Right cardiac atrium (tissue), 5 donors: ENCODE measurements at regions of chr2 and their contacts with region 1.

Region 1: DNA sequence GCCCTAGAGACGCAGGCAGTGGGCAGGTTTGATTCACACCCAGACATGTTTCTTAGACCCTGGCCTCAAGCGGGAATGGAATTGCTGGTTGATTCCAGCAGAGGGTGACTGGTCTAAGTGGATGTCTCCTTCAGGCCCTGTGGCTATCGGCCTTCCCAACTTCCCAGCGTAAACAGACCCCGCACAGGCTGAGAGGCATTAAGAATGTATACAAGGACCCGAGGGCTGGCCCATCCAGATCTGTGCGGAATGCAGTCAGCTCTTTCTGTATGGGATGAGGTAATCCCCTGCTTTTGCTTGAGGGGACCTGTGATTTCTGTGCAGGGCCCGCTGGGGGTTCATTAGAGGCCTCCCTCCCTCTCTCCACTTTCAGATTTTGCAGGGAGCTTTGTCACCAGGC is 6.5 kb downstream of the ACKR3 start:
- DNase-seq: no peak
- ATAC-seq: peak in 1 of 2 donors; percentile 6
- H3K4me3 ChIP-seq: no peak overlapping the region
- H3K27ac ChIP-seq: no peak overlapping the region
- H3K4me1 ChIP-seq: peaks cover 4% of the 10 kb centered on the region
- H3K27me3 ChIP-seq: no peaks in the 10 kb centered on the region

Region 2: GRCh38 chr2:236369661-236370062 is 206.4 kb before region 1 on chr2:
- intact Hi-C with region 1: loop called in 1 of 4 experiments (anchors 10 kb)
- DNase-seq: peak in 1 of 3 donors; percentile 80
- ATAC-seq: no peak
- H3K4me3 ChIP-seq: no peak overlapping the region
- H3K27ac ChIP-seq: no peak overlapping the region
- H3K4me1 ChIP-seq: no peaks in the 10 kb centered on the region
- H3K27me3 ChIP-seq: no peaks in the 10 kb centered on the region

Region 3: DNA sequence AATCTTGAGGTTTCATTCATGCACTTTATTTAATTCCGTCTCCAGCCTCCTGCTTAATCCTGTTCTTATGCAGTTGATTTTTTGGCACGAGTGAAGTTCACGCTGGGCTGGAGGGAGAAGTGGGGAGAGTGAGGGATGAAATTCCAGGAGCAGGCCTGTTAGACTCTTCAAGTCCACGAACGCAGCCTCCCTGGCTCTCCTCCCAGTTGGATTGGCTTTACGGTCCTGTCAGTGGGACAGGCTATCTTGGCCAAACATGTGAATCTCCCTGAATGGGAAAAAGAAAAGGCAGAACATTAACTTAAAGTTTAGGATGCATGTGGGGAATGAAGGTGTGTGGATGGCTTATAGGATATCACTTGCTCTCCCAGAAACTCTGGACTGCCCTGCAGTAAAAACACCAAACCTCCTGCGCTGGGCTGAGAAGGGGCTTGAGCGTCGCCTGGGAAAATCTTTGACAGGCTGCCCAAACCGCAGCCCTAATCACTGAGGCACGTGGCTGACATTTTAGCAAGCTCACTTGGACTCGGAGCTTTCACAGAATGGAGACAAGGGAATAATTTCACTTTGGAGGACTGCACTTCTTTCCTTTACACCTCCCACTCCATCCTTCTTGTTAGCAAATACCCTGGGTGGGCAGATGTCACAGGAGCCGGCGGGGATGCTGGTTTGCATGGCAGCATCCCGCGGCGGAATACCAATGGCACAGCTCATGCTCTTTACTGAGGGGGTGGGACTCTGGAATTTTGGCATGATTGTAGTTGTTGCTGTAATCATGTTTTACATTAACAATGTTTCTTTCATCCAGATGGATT is 87.4 kb after region 1 on chr2:
- intact Hi-C with region 1: no loop called
- DNase-seq: peak; percentile 85 to 91 (median 90)
- ATAC-seq: peak; percentile 70 to 75
- H3K4me3 ChIP-seq: no peak overlapping the region
- H3K27ac ChIP-seq: peak overlapping the region; percentile 13
- H3K4me1 ChIP-seq: peaks cover 8% of the 10 kb centered on the region
- H3K27me3 ChIP-seq: no peaks in the 10 kb centered on the region